AG04449 (cell line): ENCODE measurements at regions of chr2 and their contacts with region 1.

Region 1: GRCh38 chr2:117814417-117815264 is at the start of gene DDX18:
- DNase-seq: peak; percentile 84
- H3K4me3 ChIP-seq: peak within 1 kb of the TSS; percentile 96
- CTCF ChIP-seq: peak; percentile 99

Region 2: GRCh38 chr2:117794668-117795067 is 20.0 kb before region 1 on chr2:
- CTCF ChIA-PET with region 1: interaction called, 17 read pairs
- POLR2A ChIA-PET with region 1: interaction called, 3 read pairs
- DNase-seq: no peak
- H3K4me3 ChIP-seq: no peak overlapping the region
- CTCF ChIP-seq: no peak

Region 3: GRCh38 chr2:117825437-117825836 is 10.8 kb after region 1 on chr2:
- CTCF ChIA-PET with region 1: interaction called, 30 read pairs
- POLR2A ChIA-PET with region 1: interaction called, 3 read pairs
- DNase-seq: no peak
- H3K4me3 ChIP-seq: no peak overlapping the region
- CTCF ChIP-seq: no peak

Region 4: GRCh38 chr2:117917223-117917917 is 102.7 kb after region 1 on chr2:
- CTCF ChIA-PET with region 1: interaction called, 17 read pairs
- POLR2A ChIA-PET with region 1: no interaction called
- DNase-seq: no peak
- H3K4me3 ChIP-seq: no peak overlapping the region
- CTCF ChIP-seq: peak; percentile 38

Region 5: DNA sequence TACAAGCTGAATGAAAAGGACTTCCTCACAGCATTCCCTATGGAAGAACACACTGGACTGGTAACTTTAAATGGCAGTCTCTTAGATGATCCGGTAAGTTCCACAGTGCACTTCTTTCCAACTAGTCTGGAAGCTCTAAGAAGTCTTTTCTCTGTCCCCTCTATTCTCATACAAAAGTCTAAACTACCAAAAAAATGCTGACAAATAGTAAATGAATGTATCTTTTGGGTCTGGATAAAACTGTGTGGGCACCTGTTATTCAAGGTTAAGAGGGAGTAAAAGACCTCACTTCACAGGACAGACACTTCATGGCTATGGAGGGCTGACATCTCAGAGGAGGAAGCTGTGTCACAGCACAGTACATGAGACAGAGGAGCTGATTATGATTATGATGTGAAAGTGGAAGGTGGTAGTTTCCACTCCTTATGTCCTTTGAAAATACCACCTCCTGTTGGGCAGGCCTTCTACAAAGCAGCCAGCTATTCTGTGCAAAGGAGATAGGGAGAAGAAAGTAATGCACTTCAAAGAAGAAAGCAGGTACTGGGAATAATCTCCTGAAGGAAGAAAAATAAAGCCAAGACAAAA is 175.3 kb after region 1 on chr2:
- CTCF ChIA-PET with region 1: interaction called, 20 read pairs
- POLR2A ChIA-PET with region 1: no interaction called
- DNase-seq: no peak
- H3K4me3 ChIP-seq: no peak overlapping the region
- CTCF ChIP-seq: no peak

Region 6: DNA sequence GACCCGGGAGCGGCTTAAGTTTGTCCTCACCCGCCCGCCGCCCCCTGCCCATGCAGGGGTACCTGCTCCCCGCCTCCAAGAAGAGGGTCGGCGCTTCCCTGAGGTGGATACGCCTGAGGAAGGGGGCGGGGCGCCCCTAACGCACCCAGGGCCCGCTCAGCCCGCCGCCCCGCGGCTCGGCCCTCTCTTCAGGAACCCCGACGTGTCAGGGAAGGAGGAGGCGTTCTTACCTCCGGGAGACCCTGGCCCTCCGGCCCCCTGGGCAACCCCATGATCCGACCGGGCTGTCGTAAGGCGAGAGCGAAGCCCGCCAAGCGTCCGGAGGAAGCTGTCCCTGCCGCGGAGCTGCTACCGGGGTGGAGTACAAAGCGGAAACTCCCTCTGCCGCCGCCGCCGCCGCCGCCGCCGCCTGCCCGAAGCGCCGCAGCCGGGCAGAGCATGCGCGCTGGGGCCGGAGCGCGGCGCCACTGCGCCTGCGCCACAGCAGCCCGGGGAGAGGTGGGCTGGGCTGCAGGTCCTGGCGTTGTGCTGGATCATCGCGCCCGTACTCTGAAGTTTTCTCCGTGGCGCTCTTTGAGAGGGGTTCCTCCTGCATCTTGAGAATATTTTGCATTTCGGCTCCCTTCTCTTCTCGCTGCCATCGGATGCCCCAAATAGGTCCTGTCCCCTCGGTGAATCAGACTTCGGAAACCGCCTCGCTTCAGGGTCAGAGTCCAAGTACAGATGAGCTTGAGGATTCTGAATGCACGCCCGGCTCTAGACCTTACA is 199.3 kb after region 1 on chr2 and contains the start of gene CCDC93:
- CTCF ChIA-PET with region 1: interaction called, 15 read pairs
- POLR2A ChIA-PET with region 1: no interaction called
- DNase-seq: no peak
- H3K4me3 ChIP-seq: peak within 1 kb of the TSS; percentile 96
- CTCF ChIP-seq: no peak